PC-3 (cell line): ENCODE measurements at regions of chr19 and their contacts with region 1.

Region 1: GRCh38 chr19:55632463-55632834 is 8.1 kb upstream of the ZNF784 start:
- DNase-seq: peak; percentile 99
- ATAC-seq: peak; percentile 73
- H3K4me3 ChIP-seq: no peak overlapping the region
- H3K27ac ChIP-seq: no peak overlapping the region
- H3K4me1 ChIP-seq: peaks cover 13% of the 10 kb centered on the region
- H3K27me3 ChIP-seq: no peaks in the 10 kb centered on the region
- CTCF ChIP-seq: peak; percentile 96

Region 2: GRCh38 chr19:55461259-55461973 is 171.0 kb before region 1 on chr19 and contains the start of gene ISOC2:
- CTCF ChIA-PET with region 1: interaction called, 3 read pairs
- POLR2A ChIA-PET with region 1: no interaction called
- intact Hi-C with region 1: loop called (anchors 5 kb)
- DNase-seq: peak; percentile 100
- ATAC-seq: peak; percentile 97
- H3K4me3 ChIP-seq: peak within 1 kb of the TSS; percentile 91
- H3K27ac ChIP-seq: peak within 1 kb of the TSS; percentile 81
- H3K4me1 ChIP-seq: peaks cover 13% of the 10 kb centered on the region
- H3K27me3 ChIP-seq: no peaks in the 10 kb centered on the region
- CTCF ChIP-seq: no peak
- total RNA-seq, gene ISOC2: 251 and 270 TPM in 2 replicates

Region 3: DNA sequence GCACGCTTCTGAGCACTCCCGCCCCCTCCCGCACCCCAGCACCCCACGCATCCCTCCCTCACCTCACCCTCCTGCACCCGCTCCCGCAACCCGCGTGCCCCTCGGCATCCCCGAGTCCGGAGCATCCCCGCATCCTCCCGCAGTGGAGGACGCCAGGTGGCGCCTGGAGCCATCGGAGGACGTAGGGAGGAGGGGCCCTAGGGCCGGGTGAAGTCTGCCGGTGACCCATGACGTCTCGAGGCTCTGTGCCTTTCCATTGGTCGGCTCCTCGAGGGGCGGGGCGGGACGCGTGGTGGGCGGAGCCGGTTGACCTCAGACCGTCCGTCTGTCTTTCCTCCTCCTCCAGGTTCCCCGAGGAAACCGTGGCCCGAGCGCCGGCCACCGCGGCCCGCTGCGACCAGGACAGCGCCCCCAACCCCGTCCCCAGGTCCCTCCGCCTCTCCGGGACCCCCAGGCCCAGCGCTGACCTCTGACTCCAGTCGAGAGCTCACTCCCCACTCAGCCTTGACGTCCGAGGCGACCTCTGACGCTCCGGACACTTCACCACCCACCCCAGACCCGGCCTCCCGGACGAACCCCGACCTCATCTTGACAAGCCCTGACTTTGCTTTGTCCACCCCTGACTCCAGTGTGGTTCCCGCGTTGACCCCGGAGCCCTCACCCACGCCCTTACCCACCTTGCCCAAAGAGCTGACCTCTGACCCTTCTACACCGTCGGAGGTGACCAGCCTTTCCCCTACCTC is 115.4 kb before region 1 on chr19:
- CTCF ChIA-PET with region 1: interaction called, 4 read pairs
- POLR2A ChIA-PET with region 1: no interaction called
- intact Hi-C with region 1: loop called (anchors 1 kb)
- DNase-seq: peak; percentile 97
- ATAC-seq: peak; percentile 96
- H3K4me3 ChIP-seq: peak overlapping the region; percentile 65
- H3K27ac ChIP-seq: no peak overlapping the region
- H3K4me1 ChIP-seq: peaks cover 8% of the 10 kb centered on the region; the same call in 1 of the 2 replicates
- H3K27me3 ChIP-seq: 0 out of 2 replicates have a peak, but pooled peaks cover 4% of the 10 kb centered on the region
- CTCF ChIP-seq: peak; percentile 95

Region 4: GRCh38 chr19:55586976-55587668 is 45.3 kb before region 1 on chr19:
- CTCF ChIA-PET with region 1: no interaction called
- POLR2A ChIA-PET with region 1: no interaction called
- intact Hi-C with region 1: no loop called
- DNase-seq: peak; percentile 99
- ATAC-seq: peak; percentile 91
- H3K4me3 ChIP-seq: peak overlapping the region; percentile 66
- H3K27ac ChIP-seq: no peak overlapping the region
- H3K4me1 ChIP-seq: peaks cover 10% of the 10 kb centered on the region
- H3K27me3 ChIP-seq: no peaks in the 10 kb centered on the region
- CTCF ChIP-seq: no peak

Region 5: GRCh38 chr19:55653758-55654539 is 21.5 kb after region 1 on chr19:
- CTCF ChIA-PET with region 1: interaction called, 12 read pairs
- POLR2A ChIA-PET with region 1: no interaction called
- intact Hi-C with region 1: no loop called
- DNase-seq: peak; percentile 100
- ATAC-seq: peak; percentile 79
- H3K4me3 ChIP-seq: peak overlapping the region; percentile 78
- H3K27ac ChIP-seq: peak overlapping the region; percentile 80
- H3K4me1 ChIP-seq: peaks cover 12% of the 10 kb centered on the region
- H3K27me3 ChIP-seq: no peaks in the 10 kb centered on the region
- CTCF ChIP-seq: peak; percentile 99

Region 6: DNA sequence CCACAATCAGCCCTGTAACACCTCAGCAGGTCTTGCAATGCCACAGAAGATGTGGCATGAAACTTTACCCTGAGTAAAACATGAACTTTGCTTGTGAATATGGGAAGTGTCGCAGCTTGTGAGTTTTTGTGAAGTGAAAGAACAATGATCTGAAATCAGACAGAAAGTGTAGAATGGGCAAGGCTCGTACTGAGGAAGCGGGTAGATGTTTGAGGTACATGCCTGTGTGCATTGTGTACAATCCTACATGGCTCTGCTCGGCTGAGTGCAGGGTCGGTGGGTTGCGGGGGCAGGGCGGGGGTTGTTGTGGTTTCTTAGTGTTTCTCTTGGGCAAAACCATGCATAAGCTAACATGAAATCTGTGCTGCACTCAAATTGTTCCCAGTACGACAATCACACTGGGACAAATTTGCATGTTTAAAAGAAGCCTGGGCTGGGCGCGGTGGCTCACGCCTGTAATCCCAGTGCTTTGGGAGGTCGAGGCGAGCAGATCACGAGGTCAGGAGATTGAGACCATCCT is 298.6 kb after region 1 on chr19:
- CTCF ChIA-PET with region 1: no interaction called
- POLR2A ChIA-PET with region 1: no interaction called
- intact Hi-C with region 1: no loop called
- DNase-seq: no peak
- ATAC-seq: no peak
- H3K4me3 ChIP-seq: no peak overlapping the region
- H3K27ac ChIP-seq: no peak overlapping the region
- H3K4me1 ChIP-seq: no peaks in the 10 kb centered on the region
- H3K27me3 ChIP-seq: peaks cover 68% of the 10 kb centered on the region
- CTCF ChIP-seq: no peak